ENCODE measurements at regions of chr3 and their contacts with region 1.

Region 1: DNA sequence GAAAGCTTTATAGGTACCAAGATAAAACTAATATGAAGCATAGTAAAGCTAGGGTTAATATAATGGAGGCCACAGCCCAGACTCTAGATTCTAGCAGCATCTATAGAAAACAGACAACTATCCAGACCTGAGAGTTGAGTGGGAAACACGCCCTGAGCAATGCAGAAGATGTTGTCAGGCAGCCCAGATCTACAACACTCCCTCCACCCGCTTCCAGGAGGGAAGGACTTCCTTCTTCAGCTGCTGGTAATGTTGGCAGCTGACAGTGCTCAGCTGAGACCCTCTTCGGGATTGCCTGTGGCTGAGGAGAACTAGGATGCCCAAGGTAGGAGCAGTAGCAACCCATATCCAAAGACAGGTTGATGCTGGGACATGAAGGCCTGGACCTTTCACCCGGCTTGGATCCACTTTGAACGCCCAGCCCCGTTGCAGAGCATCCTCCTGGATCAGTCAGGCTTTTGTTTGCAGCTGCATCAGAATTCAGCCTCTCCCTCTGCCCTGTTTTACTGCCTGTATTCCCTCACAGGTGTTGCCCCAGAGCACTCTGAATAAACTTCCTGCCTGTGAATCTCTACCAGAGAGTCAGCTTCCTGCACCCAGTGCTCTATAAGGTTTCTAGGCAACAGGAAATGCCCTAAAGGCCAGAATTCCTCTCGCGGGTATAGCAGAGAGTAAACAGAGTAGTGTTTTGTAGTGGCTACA is 174.7 kb upstream of the IL12A start:
- DNase-seq: no peak
- CTCF ChIP-seq: no peak

Region 2: GRCh38 chr3:159301961-159302360 is 512.0 kb before region 1 on chr3:
- CTCF ChIA-PET with region 1: no interaction called
- POLR2A ChIA-PET with region 1: interaction called, 10 read pairs
- DNase-seq: no peak
- CTCF ChIP-seq: no peak

Region 3: DNA sequence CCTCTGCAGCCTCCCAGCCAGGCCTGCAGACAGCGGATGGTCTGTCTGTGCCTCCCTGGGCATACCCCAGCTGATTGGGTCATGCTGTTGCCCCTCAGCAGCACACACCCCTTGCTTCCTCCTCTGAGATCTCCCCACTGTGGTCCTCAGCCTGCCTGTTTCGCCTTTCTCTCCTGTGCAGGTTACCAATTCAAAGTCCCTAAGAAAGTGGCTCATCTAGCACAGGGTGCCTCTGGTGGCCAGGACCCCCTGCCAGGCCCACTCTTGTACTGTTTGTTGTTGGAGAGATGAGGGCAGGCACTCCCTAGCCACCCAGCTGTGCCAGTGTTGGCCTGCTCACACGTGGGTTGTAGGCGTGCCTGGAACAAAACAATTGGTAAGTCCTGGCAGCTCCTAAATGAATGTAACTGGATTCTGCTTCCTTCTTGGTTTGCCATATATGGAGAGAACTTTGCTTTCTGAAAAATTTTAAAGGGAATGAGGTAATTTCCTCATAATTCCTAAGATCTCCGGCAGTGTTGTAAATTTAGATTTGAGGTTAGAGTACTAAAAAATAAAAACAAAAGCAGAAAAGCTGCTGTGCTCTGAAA is 38.5 kb before region 1 on chr3:
- CTCF ChIA-PET with region 1: no interaction called
- POLR2A ChIA-PET with region 1: no interaction called
- DNase-seq: no peak
- CTCF ChIP-seq: no peak

Region 4: DNA sequence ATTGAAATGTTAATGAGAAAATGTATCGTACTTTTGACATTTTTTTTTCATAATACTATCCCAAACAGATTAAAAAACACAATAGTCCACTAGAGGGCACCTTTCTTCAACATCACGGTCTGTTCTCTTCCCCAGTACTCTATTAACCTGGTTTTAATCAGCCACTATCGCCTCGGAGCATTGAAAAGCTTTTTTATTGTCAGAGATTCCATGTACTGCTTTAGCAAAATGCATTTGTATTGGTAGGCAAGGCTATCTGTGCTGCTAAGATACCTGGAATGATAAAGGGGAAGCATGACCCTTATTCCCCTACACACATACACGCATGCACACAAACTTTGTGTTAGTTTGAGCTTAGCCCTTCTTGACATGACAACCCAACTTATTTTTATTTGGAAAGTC is 14.6 kb after region 1 on chr3:
- CTCF ChIA-PET with region 1: interaction called, 12 read pairs
- POLR2A ChIA-PET with region 1: no interaction called
- DNase-seq: peak; percentile 47
- CTCF ChIP-seq: peak; percentile 38

Measured in GM10248 (cell line).